Dorsolateral prefrontal cortex (tissue), 120 donors: ENCODE measurements at regions of chr19 and their contacts with region 1.

Region 1: DNA sequence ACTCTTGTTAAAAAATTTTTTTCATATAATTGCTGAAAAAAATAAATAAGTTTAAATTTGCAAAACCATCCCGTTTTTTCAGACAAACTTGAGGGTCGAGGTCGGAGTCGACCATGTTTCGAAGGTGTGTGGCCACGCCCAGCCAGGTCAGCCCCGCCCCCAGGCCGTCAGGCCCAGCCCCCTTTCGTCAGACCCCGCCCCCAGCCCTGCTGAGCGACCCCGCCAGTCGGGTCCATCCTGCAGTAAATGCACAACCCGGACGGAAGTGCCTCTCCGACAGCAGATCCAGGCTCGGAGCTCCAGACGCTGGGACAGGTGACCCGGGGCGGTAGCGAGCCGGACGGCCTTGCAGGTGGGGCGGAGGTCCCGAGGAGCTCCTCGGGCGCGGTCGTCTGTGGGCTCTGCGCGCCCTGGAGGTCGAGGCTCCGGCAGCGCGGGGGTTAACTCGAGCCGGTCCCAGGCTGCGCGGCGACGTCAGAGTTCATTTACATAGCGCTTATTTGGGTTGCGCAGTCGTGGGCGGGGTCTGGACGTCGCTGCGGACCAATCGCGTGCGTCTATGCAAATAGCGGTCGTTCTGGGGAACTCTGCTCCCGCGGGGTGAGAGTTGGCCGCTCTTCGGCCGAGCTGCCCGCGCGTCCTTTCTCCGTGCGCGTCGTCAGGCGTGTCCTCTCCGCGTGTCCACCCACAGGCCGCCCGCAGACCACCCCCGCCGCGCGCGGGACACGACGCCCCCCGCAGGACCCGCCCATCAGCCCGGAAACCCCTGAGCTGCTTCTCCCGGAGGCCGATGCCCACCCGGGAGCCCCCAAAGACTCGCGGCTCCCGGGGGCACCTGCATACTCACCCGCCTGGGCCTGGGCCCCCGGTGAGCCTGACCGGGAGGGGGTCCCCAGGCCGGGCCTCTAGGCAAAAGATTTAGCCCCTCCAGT is at the start of gene OCEL1:
- DNase-seq: peak; percentile 98 to 100 (median 99)
- H3K4me3 ChIP-seq: peak within 1 kb of the TSS; percentile 56 to 93 (median 76)
- H3K27ac ChIP-seq: peak within 1 kb of the TSS; percentile 19 to 97 (median 88)
- H3K27me3 ChIP-seq: no peaks in the 10 kb centered on the region
- CTCF ChIP-seq: peak in 14 of 56 donors; percentile 2 to 46 (median 18)
- total RNA-seq, gene OCEL1: 11.1 to 42.0 (median 24.9) TPM

Region 2: GRCh38 chr19:17215125-17215971 is 10.9 kb before region 1 on chr19 and contains the start of gene USE1:
- intact Hi-C with region 1: loop called in 1 of 2 experiments (anchors 1 kb)
- DNase-seq: peak; percentile 81 to 92 (median 91)
- H3K4me3 ChIP-seq: peak within 1 kb of the TSS; percentile 59 to 94 (median 81)
- H3K27ac ChIP-seq: peak within 1 kb of the TSS; percentile 44 to 99 (median 94)
- H3K27me3 ChIP-seq: no peaks in the 10 kb centered on the region
- CTCF ChIP-seq: peak in 33 of 56 donors; percentile 8 to 59 (median 25)
- total RNA-seq, gene USE1: 27.0 to 54.1 (median 39.3) TPM

Region 3: DNA sequence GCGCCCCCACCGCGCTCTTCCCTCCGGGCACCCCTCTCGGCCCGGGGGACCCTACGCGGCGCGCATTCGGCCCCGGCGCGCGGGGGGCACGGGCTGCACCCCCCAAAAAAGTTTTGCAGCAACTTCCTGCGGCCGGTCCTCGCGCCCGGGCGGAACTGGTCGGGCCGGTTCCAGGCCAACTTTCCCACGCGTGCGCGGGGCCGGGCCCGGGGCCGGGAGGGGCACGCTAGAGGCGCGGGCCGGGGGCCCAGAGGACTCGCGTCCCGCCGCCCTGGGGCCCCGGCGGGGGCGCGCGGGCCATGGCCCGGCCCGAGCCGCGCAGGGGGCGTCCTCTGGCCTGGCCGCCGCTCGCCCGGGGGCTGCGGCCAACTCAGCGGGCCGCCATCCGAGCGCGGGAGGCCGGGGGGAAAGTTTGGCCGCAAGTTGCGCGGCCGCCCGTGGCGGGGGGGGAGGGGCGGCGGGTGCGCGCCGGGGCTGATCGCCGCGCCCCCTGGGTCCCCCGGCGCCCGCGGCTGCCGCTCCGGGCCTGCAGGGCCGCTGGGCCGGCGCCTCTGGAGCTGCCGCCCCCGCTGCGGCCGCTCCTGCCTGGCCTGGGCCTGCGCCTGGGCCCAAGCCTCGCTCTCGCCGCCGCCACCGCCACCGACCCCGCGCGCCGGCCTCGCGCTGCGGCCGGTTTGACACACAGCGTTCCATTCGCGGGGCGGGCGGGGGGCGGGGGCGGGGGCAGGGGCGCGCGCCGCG is 19.1 kb after region 1 on chr19 and contains the start of gene NR2F6:
- intact Hi-C with region 1: loop called in 1 of 2 experiments (anchors 2 kb)
- DNase-seq: peak in 1 of 10 donors; percentile 56
- H3K4me3 ChIP-seq: peak within 1 kb of the TSS; percentile 54 to 82 (median 71)
- H3K27ac ChIP-seq: peak within 1 kb of the TSS in 56 of 59 donors; percentile 22 to 91 (median 78)
- H3K27me3 ChIP-seq: no peaks in the 10 kb centered on the region
- CTCF ChIP-seq: no peak
- total RNA-seq, gene NR2F6: 15.4 to 52.5 (median 27.8) TPM

Region 4: GRCh38 chr19:17266975-17267788 is 40.9 kb after region 1 on chr19 and contains the start of gene BABAM1:
- intact Hi-C with region 1: loop called in 1 of 2 experiments (anchors 5 kb)
- DNase-seq: peak; percentile 94 to 99 (median 96)
- H3K4me3 ChIP-seq: peak within 1 kb of the TSS; percentile 54 to 99 (median 86)
- H3K27ac ChIP-seq: peak within 1 kb of the TSS in 58 of 59 donors; percentile 22 to 93 (median 78)
- H3K27me3 ChIP-seq: no peaks in the 10 kb centered on the region
- CTCF ChIP-seq: peak in 17 of 56 donors; percentile 7 to 51 (median 19)
- total RNA-seq, gene BABAM1: 78.2 to 165 (median 122) TPM